ENCODE measurements at regions of chr14 and their contacts with region 1.

Region 1: DNA sequence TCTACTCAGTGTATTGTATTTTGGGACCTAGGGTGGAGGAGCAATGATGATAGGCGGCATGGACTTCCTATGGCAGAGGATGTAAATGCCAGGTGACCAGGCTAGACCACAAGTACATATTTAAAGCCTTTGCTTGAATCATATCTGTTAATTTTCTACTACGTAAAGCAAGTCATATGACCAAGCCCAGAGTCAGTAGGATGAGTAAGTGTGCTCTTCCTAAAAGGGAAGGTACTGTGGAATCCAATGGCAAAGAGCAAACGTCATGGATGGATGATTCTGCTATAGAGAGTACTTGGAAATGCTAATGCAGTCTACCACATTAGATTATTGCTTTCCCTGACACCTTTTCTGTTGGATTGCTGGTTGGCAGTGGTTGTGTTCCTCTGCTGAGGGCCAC is 16.8 kb downstream of the GPATCH2L start:
- DNase-seq: no peak
- ATAC-seq: no peak
- H3K4me3 ChIP-seq: no peak overlapping the region
- H3K27ac ChIP-seq: no peak overlapping the region
- H3K4me1 ChIP-seq: peaks cover under 1 to 22% (median 8%) of the 10 kb centered on the region in 9 donors
- H3K27me3 ChIP-seq: no peaks in the 10 kb centered on the region
- CTCF ChIP-seq: no peak

Region 2: DNA sequence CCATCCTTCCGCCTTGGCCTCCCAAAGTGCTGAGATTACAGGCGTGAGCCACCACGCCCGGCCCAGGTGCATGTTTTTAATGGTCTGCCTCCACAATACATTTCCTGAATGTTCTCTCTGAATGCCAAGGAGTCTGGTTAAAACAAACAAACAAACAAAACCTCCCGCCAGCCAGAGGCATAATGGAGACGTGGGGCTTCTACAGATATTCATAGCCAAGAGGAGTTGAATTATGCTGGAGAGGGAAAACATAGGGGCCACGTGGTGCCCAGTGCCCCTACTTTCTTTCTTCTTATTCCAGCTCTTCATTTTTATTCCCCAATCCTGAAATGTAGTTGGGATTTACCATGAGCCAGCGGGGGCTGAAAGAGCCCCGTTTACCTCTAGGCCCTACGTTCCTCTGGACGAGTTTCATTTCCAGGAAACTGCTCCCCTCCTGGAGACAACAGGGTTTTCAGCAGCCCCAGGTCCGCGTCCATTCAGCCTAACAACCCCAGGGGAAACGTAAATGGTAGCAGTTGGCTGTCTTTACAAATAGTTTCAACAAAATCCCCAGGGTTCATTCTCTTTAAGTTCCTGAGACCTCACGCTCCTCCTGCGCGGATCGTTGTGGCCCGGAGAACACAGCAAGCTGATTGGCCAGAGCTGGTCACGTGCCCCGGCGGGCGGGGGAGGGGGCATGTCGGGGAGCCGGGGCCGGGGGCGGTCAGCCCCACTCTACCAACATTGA is 99.0 kb after region 1 on chr14:
- intact Hi-C with region 1: loop called in 1 of 10 experiments (anchors 10 kb)
- DNase-seq: peak; percentile 55 to 78
- ATAC-seq: peak; percentile 87 to 93 (median 91)
- H3K4me3 ChIP-seq: peak overlapping the region; percentile 16 to 62 (median 50)
- H3K27ac ChIP-seq: peak overlapping the region in 5 of 10 donors; percentile 17 to 46 (median 34)
- H3K4me1 ChIP-seq: peaks cover 0 to 13% (median 5%) of the 10 kb centered on the region in 9 donors
- H3K27me3 ChIP-seq: peaks cover 0 to 16% (median 0%) of the 10 kb centered on the region in 7 donors
- CTCF ChIP-seq: peak in 1 of 9 donors; percentile 12

Region 3: DNA sequence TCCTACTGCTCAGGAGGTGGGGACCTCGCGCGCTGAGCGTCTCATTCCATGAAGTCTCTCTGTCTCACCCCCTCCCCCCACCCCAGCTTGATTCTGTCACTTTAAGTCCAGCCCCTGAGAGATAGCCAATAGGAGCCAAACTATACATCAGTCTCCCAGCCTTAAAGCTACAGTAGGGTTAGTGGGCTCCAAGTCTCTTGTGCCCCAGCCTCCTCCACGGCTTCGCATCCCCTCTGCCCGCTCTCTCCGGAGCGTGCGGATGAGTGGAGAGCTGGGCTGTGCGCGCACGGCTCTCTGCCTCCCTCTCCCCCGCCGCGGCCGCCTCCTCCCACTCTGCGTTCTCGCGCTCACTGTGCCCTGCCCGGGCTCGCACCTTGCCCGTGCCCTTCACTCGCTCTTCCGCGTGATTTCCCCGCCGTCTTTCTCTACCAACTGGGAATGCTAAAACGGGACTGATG is 207.4 kb after region 1 on chr14 and contains the start of gene ESRRB:
- intact Hi-C with region 1: no loop called
- DNase-seq: no peak
- ATAC-seq: peak in 5 of 8 donors; percentile 34 to 68 (median 42)
- H3K4me3 ChIP-seq: peak within 1 kb of the TSS in 9 of 10 donors; percentile 14 to 48 (median 42)
- H3K27ac ChIP-seq: no peak within 1 kb of the TSS
- H3K4me1 ChIP-seq: peaks cover 3 to 23% (median 13%) of the 10 kb centered on the region in 9 donors
- H3K27me3 ChIP-seq: peaks cover 4 to 77% (median 55%) of the 10 kb centered on the region in 7 donors
- CTCF ChIP-seq: no peak
- total RNA-seq, gene ESRRB: 2.5 to 13.4 (median 7.4) TPM